Naive thymus-derived CD4-positive, alpha-beta T cell (primary cell): ENCODE measurements at regions of chr12 and their contacts with region 1.

Region 1: GRCh38 chr12:48995061-48995879 is 3.9 kb downstream of the DDN start:
- DNase-seq: peak in 3 of 9 donors; percentile 36 to 56 (median 54)
- ATAC-seq: peak; percentile 51
- H3K4me3 ChIP-seq: no peak overlapping the region
- H3K4me3 Mint-ChIP-seq: peak overlapping the region in 9 of 10 donors; percentile 15 to 81 (median 71)
- H3K27ac ChIP-seq: no peak overlapping the region
- H3K27ac Mint-ChIP-seq: peak overlapping the region in 2 of 9 donors; percentile 31 to 90
- H3K4me1 ChIP-seq: peaks cover 13 to 26% of the 10 kb centered on the region in 2 donors
- H3K4me1 Mint-ChIP-seq: peaks cover 24 to 39% (median 32%) of the 10 kb centered on the region in 7 donors
- H3K27me3 ChIP-seq: peaks cover 0 to 25% of the 10 kb centered on the region in 2 donors
- H3K27me3 Mint-ChIP-seq: peaks cover 48 to 75% (median 56%) of the 10 kb centered on the region in 5 donors

Region 2: DNA sequence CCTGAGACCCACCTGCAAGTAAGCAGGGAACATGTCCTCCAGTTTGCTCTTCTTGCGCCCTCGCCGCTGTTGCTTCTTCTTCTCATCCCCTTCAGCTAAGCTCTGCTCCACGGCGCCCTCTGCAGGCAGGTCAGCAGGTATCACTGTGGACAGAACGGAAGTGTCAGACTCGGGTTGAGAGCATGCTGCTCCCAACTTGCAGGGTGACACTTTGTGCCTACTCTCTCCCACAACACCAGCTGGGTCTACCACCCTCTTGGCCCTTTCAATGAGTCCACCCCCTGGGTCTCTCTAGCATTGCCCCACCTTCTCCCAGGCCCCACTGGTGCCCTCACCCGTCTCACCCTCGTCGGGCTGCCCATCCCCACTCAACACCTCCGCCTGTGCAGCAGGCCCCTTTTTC is 48.6 kb after region 1 on chr12:
- CTCF ChIA-PET with region 1: interaction called, 4 read pairs
- POLR2A ChIA-PET with region 1: interaction called, 4 read pairs
- intact Hi-C with region 1: loop called in 1 of 2 experiments (anchors 1 kb)
- DNase-seq: peak; percentile 65 to 80 (median 75)
- ATAC-seq: peak; percentile 90
- H3K4me3 ChIP-seq: no peak overlapping the region
- H3K4me3 Mint-ChIP-seq: peak overlapping the region in 1 of 10 donors; percentile 7
- H3K27ac ChIP-seq: peak overlapping the region; percentile 40
- H3K27ac Mint-ChIP-seq: peak overlapping the region in 5 of 9 donors; percentile 38 to 81 (median 78)
- H3K4me1 ChIP-seq: peaks cover 0 to 9% of the 10 kb centered on the region in 2 donors
- H3K4me1 Mint-ChIP-seq: peaks cover 0 to 10% (median 4%) of the 10 kb centered on the region in 7 donors
- H3K27me3 ChIP-seq: no peaks in the 10 kb centered on the region
- H3K27me3 Mint-ChIP-seq: no peaks in the 10 kb centered on the region

Region 3: GRCh38 chr12:49088190-49088931 is 93.1 kb after region 1 on chr12:
- CTCF ChIA-PET with region 1: interaction called, 10 read pairs
- POLR2A ChIA-PET with region 1: no interaction called
- intact Hi-C with region 1: loop called (anchors 1 to 2 kb)
- DNase-seq: peak; percentile 39 to 73 (median 70)
- ATAC-seq: peak; percentile 94
- H3K4me3 ChIP-seq: no peak overlapping the region
- H3K4me3 Mint-ChIP-seq: peak overlapping the region in 7 of 10 donors; percentile 11 to 59 (median 48)
- H3K27ac ChIP-seq: no peak overlapping the region
- H3K27ac Mint-ChIP-seq: peak overlapping the region in 2 of 9 donors; percentile 5 to 34
- H3K4me1 ChIP-seq: peaks cover 35 to 40% of the 10 kb centered on the region in 2 donors
- H3K4me1 Mint-ChIP-seq: peaks cover 22 to 53% (median 38%) of the 10 kb centered on the region in 7 donors
- H3K27me3 ChIP-seq: peaks cover 14 to 37% of the 10 kb centered on the region in 2 donors
- H3K27me3 Mint-ChIP-seq: peaks cover 32 to 58% (median 49%) of the 10 kb centered on the region in 5 donors